Aorta (tissue), 5 donors: ENCODE measurements at regions of chr11 and their contacts with region 1.

Region 1: DNA sequence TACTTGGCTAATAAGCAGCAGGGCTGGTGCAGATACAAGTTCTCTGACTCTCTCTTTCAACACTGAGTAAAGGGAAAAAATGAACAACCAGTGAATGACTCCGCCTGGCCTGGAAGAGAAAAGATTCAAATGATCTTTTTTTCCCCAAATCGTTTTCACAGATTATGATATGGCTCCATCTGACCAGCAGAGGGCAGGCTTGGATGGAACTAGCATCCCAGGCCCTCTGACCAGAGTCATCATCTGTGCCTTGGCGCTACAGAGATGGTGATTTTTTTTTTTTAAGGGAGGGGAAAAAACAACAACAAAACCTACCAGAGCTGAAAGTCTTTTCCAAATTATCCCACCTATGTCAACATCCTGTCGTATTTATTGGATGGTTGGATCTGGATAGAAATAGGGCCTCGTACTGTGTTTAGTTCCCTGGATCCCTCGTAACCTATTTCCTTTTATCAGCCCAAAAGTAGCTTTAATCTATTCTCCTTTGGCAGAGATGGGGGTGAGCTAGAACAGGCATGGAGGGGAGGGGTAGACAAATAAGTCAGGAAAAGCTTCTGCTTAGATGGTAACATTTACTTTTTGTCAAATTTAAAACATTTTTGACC is 69.7 kb downstream of the PRSS23 start:
- DNase-seq: peak; percentile 75 to 80
- ATAC-seq: peak; percentile 90
- H3K4me3 ChIP-seq: no peak overlapping the region
- H3K27ac ChIP-seq: no peak overlapping the region
- H3K4me1 ChIP-seq: peaks cover 3 to 4% of the 10 kb centered on the region in 2 donors
- H3K27me3 ChIP-seq: no peaks in the 10 kb centered on the region

Region 2: GRCh38 chr11:86919557-86920210 is 49.6 kb after region 1 on chr11:
- intact Hi-C with region 1: loop called (anchors 1 kb)
- DNase-seq: no peak
- ATAC-seq: peak; percentile 67
- H3K4me3 ChIP-seq: no peak overlapping the region
- H3K27ac ChIP-seq: peak overlapping the region; percentile 87 to 97
- H3K4me1 ChIP-seq: peaks cover 2 to 5% of the 10 kb centered on the region in 2 donors
- H3K27me3 ChIP-seq: no peaks in the 10 kb centered on the region

Region 3: GRCh38 chr11:87290304-87290922 is 420.3 kb after region 1 on chr11:
- intact Hi-C with region 1: loop called (anchors 5 kb)
- DNase-seq: no peak
- ATAC-seq: peak; percentile 59
- H3K4me3 ChIP-seq: no peak overlapping the region
- H3K27ac ChIP-seq: no peak overlapping the region
- H3K4me1 ChIP-seq: no peaks in the 10 kb centered on the region
- H3K27me3 ChIP-seq: no peaks in the 10 kb centered on the region